ENCODE measurements at regions of chr9 and their contacts with region 1.

Region 1: DNA sequence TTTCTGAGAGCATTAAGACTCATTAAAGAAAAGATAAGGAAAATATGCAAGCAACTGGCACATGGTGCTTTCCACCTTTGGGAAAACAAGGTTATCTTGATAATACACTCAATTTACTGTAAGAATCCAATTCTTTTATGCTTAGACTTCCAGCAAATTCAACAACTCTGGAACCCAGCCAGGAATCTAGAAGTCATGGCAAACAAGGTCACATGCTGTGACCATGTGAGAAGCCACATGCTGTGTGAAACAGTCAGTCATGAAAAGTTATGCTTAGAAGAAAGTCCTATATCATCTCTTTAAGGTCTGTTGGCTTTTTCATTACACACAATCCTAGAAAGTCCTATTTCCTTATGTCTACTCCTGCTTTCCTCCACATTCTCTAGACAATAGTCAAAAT is 581.8 kb upstream of the C9orf72 start:
- DNase-seq: no peak
- H3K4me3 ChIP-seq: no peak overlapping the region
- H3K4me3 Mint-ChIP-seq: no peak overlapping the region
- H3K27ac ChIP-seq: no peak overlapping the region
- H3K27ac Mint-ChIP-seq: no peak overlapping the region
- H3K4me1 ChIP-seq: no peaks in the 10 kb centered on the region
- H3K4me1 Mint-ChIP-seq: no peaks in the 10 kb centered on the region
- H3K27me3 ChIP-seq: no peaks in the 10 kb centered on the region
- H3K27me3 Mint-ChIP-seq: no peaks in the 10 kb centered on the region

Region 2: DNA sequence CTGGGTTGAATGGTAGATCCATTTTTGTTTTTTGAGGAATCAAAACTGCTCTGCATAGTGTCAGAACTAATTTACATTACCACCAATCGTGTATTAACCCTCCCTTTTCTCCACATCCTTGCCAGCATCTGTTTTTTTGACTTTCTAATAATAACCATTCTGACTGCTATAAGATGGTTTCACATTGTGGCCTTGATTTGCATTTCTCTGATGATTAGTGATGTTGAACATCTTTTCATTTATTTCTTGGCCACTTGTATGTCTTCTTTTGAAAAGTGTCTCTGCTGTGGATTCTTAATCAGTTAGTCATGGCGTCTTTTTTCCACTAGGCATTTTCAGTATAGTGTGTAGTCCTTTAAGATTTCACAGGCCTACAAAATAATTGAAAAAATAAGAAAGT is 1562.6 kb after region 1 on chr9:
- CTCF ChIA-PET with region 1: no interaction called
- POLR2A ChIA-PET with region 1: no interaction called
- intact Hi-C with region 1: loop called (anchors 10 kb)
- DNase-seq: no peak
- H3K4me3 ChIP-seq: no peak overlapping the region
- H3K4me3 Mint-ChIP-seq: no peak overlapping the region
- H3K27ac ChIP-seq: no peak overlapping the region
- H3K27ac Mint-ChIP-seq: no peak overlapping the region
- H3K4me1 ChIP-seq: no peaks in the 10 kb centered on the region
- H3K4me1 Mint-ChIP-seq: no peaks in the 10 kb centered on the region
- H3K27me3 ChIP-seq: no peaks in the 10 kb centered on the region
- H3K27me3 Mint-ChIP-seq: no peaks in the 10 kb centered on the region